HEK293 (cell line): ENCODE measurements at regions of chr11 and their contacts with region 1.

Region 1: DNA sequence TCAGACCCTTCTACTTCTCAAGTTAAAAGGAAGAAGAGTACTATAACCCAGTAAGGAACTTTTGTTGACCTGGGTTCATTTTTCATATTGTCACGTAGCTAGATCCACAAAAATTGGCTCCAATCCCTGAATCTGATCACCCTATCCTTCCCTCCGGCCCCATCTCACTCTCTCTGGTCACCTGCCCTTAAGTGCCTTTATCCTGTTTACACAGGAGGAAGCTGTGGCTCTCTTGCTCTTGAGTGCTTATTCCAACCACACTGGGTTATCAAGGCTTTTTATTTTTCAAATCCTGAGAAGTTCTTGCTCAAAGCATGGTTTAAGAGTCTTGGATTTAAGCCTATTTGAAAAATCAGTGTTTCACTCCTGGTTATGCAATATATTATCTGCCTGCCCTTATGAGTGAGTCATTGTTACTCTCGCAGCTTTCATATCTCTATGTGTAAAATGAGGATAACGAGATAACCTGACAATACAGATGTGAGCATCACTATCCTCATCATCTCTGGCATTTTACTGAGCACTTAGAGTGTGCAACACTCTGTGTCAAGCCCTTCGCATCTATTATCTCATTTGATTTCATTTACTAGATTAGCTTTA is 293.9 kb downstream of the GUCY1A2 start:
- H3K4me3 ChIP-seq: no peak overlapping the region
- H3K27ac ChIP-seq: no peak overlapping the region
- H3K4me1 ChIP-seq: no peaks in the 10 kb centered on the region
- CTCF ChIP-seq: no peak

Region 2: DNA sequence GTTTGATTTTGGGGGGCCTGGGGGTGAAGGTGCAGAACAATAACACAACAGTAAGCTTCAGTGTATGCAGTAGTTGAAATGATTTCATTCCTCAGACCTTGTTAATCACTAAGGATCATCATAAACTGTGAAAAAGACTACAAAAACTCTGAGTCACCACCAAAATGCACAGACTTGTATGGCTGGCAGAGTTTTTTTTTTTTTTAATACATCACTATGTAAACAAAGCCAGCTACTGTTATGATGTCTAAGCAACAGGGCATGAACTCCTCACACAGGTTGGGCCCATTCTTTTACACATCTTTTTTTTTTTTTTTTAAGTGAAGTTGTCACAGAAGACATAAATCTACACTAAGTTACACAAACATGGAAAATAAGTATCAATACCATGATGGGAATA is 18.0 kb before region 1 on chr11:
- CTCF ChIA-PET with region 1: interaction called, 11 read pairs
- POLR2A ChIA-PET with region 1: no interaction called
- H3K4me3 ChIP-seq: no peak overlapping the region
- H3K27ac ChIP-seq: no peak overlapping the region
- H3K4me1 ChIP-seq: 0 out of 2 replicates have a peak, but pooled peaks cover 2% of the 10 kb centered on the region
- CTCF ChIP-seq: no peak